Mammary epithelial cell (primary cell): ENCODE measurements at regions of chr3 and their contacts with region 1.

Region 1: DNA sequence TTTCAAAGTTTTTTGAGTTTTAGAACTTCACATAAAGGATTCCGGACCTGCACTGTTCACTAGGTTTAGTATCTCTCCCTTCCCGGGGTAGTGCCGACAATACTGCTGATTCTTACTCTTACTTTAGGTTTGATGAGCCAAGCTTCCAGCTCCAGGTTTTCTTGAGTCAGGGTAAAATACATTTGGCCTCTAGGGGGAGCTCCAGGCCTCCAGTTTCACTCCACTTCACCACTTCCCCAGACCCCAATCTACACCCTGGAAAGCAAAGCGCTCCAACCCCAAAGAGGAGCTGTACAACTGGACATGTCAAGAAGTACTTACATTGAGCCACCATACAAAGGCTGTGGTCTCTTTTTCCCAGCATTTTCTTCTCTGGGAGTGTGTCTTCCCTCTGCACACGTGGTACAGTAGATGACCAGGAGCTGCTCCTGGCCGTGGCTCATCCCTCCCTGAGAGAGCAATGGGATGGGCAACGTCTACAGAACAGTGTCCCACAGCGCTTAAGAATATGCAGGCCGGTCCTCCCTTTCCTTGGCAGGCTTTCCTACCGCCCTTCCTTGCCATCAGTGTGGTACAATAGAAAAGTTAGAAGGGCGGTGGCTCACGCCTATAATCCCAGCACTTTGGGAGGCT is 93.9 kb upstream of the CCDC80 start:
- DNase-seq: peak; percentile 64
- H3K4me3 ChIP-seq: no peak overlapping the region
- H3K27ac ChIP-seq: peak overlapping the region; percentile 12
- H3K4me1 ChIP-seq: peaks cover 32% of the 10 kb centered on the region
- H3K27me3 ChIP-seq: no peaks in the 10 kb centered on the region
- CTCF ChIP-seq: peak; percentile 67 to 81

Region 2: DNA sequence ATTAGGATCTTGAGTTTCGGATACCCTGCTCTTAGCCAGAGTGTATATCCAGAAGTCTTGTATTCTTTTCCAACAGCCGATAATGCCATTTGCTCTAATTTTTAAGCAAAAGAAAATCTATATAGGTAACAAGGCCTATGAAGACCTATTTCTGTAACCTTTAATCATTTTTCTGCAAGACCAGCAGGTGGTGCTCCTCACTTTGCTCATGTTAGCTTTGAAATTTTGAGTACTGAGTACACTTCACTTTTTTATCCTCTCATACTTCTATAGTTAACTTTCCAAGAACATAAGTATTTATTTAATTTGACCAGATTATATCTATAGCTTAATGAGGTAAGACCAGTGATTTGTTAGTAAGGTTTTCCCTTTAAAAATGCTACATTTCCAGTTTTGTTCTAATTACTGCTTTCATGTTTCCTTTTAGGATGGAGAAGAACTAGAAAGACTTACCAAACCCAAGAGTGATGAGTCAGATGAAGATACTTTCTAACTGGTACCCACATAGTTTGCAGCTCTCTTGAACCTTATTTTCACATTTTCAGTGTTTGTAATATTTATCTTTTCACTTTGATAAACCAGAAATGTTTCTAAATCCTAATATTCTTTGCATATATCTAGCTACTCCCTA is 152.5 kb before region 1 on chr3:
- CTCF ChIA-PET with region 1: no interaction called
- dilution Hi-C with region 1: no loop called
- in situ Hi-C with region 1: no loop called
- intact Hi-C with region 1: loop called (anchors 1 kb)
- DNase-seq: peak; percentile 29
- H3K4me3 ChIP-seq: no peak overlapping the region
- H3K27ac ChIP-seq: no peak overlapping the region
- H3K4me1 ChIP-seq: no peaks in the 10 kb centered on the region
- H3K27me3 ChIP-seq: no peaks in the 10 kb centered on the region
- CTCF ChIP-seq: peak; percentile 50 to 68

Region 3: DNA sequence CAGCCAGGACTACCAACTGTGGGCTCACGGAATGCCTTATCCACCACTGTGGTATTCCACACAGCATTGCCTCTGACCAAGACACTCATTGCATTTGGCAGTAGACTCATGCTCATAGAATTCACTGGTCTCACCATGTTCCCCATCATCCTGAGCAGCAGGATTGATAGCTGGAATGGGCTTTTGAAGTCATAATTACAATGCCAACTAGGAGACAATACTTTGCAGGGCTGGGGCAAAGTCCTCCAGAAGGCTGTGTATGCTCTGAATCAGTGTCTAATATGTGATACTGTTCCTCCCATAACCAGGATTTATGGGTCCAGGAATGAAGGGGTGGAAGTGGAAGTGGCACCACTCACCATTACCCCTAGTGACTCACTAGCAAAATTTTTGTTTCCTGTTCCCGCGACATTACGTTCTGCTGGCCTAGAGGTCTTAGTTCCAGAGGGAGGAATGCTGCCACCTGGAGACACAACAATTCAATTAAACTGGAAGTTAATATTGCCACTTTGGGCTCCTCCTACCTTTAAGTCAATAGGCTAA is 35.3 kb before region 1 on chr3:
- CTCF ChIA-PET with region 1: no interaction called
- dilution Hi-C with region 1: no loop called
- in situ Hi-C with region 1: no loop called
- intact Hi-C with region 1: loop called (anchors 1 kb)
- DNase-seq: peak; percentile 69
- H3K4me3 ChIP-seq: no peak overlapping the region
- H3K27ac ChIP-seq: no peak overlapping the region
- H3K4me1 ChIP-seq: peaks cover 9% of the 10 kb centered on the region
- H3K27me3 ChIP-seq: no peaks in the 10 kb centered on the region
- CTCF ChIP-seq: peak in 1 of 2 donors; percentile 27

Region 4: GRCh38 chr3:112814266-112814665 is 79.4 kb after region 1 on chr3:
- CTCF ChIA-PET with region 1: interaction called, 7 read pairs
- dilution Hi-C with region 1: no loop called
- in situ Hi-C with region 1: loop called (anchors 5 to 10 kb)
- intact Hi-C with region 1: loop called (anchors 1 kb)
- DNase-seq: peak; percentile 46
- H3K4me3 ChIP-seq: no peak overlapping the region
- H3K27ac ChIP-seq: no peak overlapping the region
- H3K4me1 ChIP-seq: peaks cover 7% of the 10 kb centered on the region
- H3K27me3 ChIP-seq: no peaks in the 10 kb centered on the region
- CTCF ChIP-seq: peak; percentile 38 to 66

Region 5: GRCh38 chr3:112984485-112984884 is 249.7 kb after region 1 on chr3:
- CTCF ChIA-PET with region 1: no interaction called
- dilution Hi-C with region 1: loop called (anchors 25 kb)
- in situ Hi-C with region 1: loop called (anchors 10 kb)
- intact Hi-C with region 1: loop called (anchors 1 kb)
- DNase-seq: no peak
- H3K4me3 ChIP-seq: no peak overlapping the region
- H3K27ac ChIP-seq: no peak overlapping the region
- H3K4me1 ChIP-seq: no peaks in the 10 kb centered on the region
- H3K27me3 ChIP-seq: no peaks in the 10 kb centered on the region
- CTCF ChIP-seq: no peak

Region 6: GRCh38 chr3:114112696-114113095 is 1377.9 kb after region 1 on chr3:
- CTCF ChIA-PET with region 1: no interaction called
- dilution Hi-C with region 1: no loop called
- in situ Hi-C with region 1: no loop called
- intact Hi-C with region 1: no loop called
- DNase-seq: no peak
- H3K4me3 ChIP-seq: no peak overlapping the region
- H3K27ac ChIP-seq: no peak overlapping the region
- H3K4me1 ChIP-seq: no peaks in the 10 kb centered on the region
- H3K27me3 ChIP-seq: peaks cover 8% of the 10 kb centered on the region
- CTCF ChIP-seq: no peak